Activated T-helper 1 cell treated with anti-CD3 and anti-CD28 coated beads, Interleukin-12 subunit alpha, Interleukin-12 subunit beta, Interleukin-2, Interleukin-4 antibody, amounts not matched to agents 30 ng/mL and 10 ng/mL and 1 ng/mL, durations not matched to agents 14 hours and 24 hours and 36 hours (primary cell): ENCODE measurements at regions of chr17 and their contacts with region 1.

Region 1: GRCh38 chr17:49191917-49192741 is 18.2 kb downstream of the GNGT2 start:
- DNase-seq: peak; percentile 88
- H3K4me3 Mint-ChIP-seq: peak overlapping the region; percentile 89
- H3K27ac Mint-ChIP-seq: peak overlapping the region; percentile 98
- H3K4me1 Mint-ChIP-seq: peaks cover 49% of the 10 kb centered on the region
- H3K27me3 Mint-ChIP-seq: peaks cover 8% of the 10 kb centered on the region

Region 2: GRCh38 chr17:48429638-48430586 is 762.2 kb before region 1 on chr17 and contains the start of gene SKAP1:
- intact Hi-C with region 1: loop called (anchors 10 kb)
- DNase-seq: peak; percentile 68
- H3K4me3 Mint-ChIP-seq: peak within 1 kb of the TSS; percentile 98
- H3K27ac Mint-ChIP-seq: peak within 1 kb of the TSS; percentile 99
- H3K4me1 Mint-ChIP-seq: peaks cover 72% of the 10 kb centered on the region
- H3K27me3 Mint-ChIP-seq: peaks cover 1% of the 10 kb centered on the region
- total RNA-seq, gene SKAP1: 48.7 and 51.9 TPM in 2 replicates

Region 3: DNA sequence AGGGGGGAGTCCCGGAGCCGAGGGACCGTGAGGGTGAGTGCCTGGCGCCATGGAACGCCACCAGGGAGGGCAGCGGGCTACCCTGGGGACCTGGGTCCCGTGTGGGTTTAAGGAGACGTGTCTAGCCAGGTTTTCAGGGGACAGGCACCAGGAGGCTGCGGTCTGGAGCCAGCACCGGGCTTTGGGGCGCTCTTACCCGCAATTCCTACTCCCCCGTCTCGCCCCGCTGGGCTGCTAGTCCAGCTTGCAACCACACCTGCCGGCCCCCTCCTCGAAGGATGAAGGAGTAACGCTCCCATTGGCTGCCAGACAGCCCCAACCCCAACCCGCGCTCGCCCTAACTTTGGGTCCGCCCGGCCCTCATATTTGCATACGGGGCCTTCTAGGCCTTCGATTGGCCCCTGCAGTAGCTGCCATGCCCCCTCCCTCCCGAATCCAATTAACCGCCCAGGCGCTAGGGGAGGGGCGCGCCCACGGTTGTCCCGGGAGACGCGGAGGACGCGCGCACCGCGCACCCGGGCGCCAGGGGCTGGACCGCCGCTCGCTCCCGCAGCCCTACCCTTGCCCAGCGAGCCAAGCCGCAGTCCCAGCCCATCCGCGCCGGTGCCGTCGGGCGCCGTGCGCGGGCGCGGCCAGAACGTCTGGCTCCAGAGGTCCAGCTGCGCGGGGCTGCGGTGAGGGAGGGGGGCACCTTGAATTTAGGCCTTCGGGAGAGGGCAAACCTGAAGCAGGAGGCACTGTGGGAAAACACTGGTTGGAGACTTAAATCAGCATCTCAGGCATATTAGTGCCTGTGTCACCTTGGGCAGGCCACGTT is 375.1 kb before region 1 on chr17 and contains the start of gene TTLL6:
- intact Hi-C with region 1: no loop called
- DNase-seq: peak; percentile 81
- H3K4me3 Mint-ChIP-seq: peak within 1 kb of the TSS; percentile 81
- H3K27ac Mint-ChIP-seq: no peak within 1 kb of the TSS
- H3K4me1 Mint-ChIP-seq: peaks cover 18% of the 10 kb centered on the region
- H3K27me3 Mint-ChIP-seq: peaks cover 65% of the 10 kb centered on the region
- total RNA-seq, gene TTLL6: not detected in 2 replicates

Region 4: DNA sequence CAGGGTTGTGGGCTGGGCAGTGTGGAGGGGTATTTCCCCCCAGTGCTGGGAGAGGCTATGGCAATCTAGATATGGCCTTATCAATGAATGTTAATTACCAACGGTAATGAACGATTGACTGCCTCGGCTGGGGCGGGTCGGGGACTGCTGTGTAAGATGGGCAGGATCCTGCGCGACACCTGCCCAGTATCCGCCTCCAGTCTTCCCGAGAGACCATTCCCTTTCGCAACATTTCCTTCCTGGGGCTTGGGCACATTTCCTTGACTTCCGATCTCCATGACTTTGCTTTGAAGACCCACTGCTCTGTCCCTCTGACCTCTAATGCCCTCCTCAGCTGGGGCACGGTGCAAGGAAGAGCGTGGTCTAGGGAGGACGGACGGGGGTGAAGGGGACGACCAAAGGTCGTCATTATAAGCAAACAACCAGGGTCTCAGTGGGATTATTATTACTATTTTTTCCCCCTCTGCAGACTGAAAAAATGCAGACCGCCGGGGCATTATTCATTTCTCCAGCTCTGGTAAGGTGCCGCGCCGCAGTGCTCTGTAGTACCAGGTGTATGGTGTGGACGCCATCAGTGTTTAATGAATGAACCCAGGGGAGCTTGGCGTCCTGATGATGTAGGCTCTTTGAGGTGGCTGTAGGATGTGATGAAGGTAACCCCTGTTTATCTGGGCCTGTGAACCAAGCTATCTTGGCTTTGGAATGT is 299.0 kb before region 1 on chr17:
- intact Hi-C with region 1: loop called (anchors 1 kb)
- DNase-seq: no peak
- H3K4me3 Mint-ChIP-seq: peak overlapping the region; percentile 97
- H3K27ac Mint-ChIP-seq: peak overlapping the region; percentile 95
- H3K4me1 Mint-ChIP-seq: peaks cover 31% of the 10 kb centered on the region
- H3K27me3 Mint-ChIP-seq: no peaks in the 10 kb centered on the region

Region 5: DNA sequence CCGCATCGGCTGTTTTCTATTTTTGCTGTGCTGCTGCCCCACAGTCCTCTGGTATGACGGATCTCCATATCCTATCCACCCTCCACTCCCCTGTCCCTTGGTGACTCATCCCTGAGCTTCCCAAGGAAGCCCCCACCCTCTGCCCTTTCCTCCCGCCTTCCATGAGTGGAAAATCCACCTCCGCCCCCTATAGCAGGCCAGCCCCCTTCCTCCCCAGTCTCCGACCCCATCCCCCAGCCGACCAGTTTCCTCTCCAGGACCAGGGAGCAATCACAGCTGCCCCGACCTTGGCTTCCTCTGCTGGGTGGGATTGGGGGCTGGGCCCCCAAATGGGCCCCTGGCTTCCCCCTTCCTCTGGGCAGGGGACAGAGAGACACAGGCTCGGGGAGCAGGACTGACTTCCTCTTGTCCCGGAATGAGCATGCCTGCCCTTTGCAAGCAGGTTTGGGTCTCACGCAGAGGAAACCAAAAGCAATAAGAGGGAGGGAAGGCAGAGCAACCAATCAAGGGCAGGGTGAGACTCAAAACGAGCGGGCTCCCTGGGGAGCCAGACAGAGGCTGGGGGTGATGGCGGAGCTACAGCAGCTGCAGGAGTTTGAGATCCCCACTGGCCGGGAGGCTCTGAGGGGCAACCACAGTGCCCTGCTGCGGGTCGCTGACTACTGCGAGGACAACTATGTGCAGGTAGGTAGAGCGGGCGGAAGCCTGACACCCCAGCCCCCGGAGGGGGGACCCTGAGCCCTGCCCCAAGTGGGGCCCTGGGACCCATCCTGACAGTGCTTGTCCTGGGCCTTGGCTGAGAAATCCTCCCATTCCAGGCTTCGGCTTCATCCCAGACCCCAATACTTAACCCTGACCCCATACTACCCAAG is 18.3 kb after region 1 on chr17 and contains the starts of genes ABI3 and GNGT2:
- intact Hi-C with region 1: loop called (anchors 1 kb)
- DNase-seq: peak; percentile 65
- H3K4me3 Mint-ChIP-seq: peak within 1 kb of the TSS; percentile 96
- H3K27ac Mint-ChIP-seq: peak within 1 kb of the TSS; percentile 88
- H3K4me1 Mint-ChIP-seq: peaks cover 63% of the 10 kb centered on the region
- H3K27me3 Mint-ChIP-seq: no peaks in the 10 kb centered on the region
- total RNA-seq, gene ABI3: 32.8 and 33.0 TPM in 2 replicates
- total RNA-seq, gene GNGT2: 16.5 and 18.4 TPM in 2 replicates

Region 6: GRCh38 chr17:49230636-49231562 is 38.8 kb after region 1 on chr17 and contains the start of gene PHOSPHO1:
- intact Hi-C with region 1: loop called (anchors 1 kb)
- DNase-seq: peak; percentile 82
- H3K4me3 Mint-ChIP-seq: peak within 1 kb of the TSS; percentile 87
- H3K27ac Mint-ChIP-seq: no peak within 1 kb of the TSS
- H3K4me1 Mint-ChIP-seq: peaks cover 24% of the 10 kb centered on the region
- H3K27me3 Mint-ChIP-seq: peaks cover 37% of the 10 kb centered on the region
- total RNA-seq, gene PHOSPHO1: 0.37 TPM in 1 of 2 replicates, not detected in the other

Region 7: GRCh38 chr17:49277638-49278037 is 85.5 kb after region 1 on chr17:
- intact Hi-C with region 1: no loop called
- DNase-seq: no peak
- H3K4me3 Mint-ChIP-seq: no peak overlapping the region
- H3K27ac Mint-ChIP-seq: no peak overlapping the region
- H3K4me1 Mint-ChIP-seq: no peaks in the 10 kb centered on the region
- H3K27me3 Mint-ChIP-seq: peaks cover 8% of the 10 kb centered on the region

Region 8: GRCh38 chr17:49333804-49334203 is 141.7 kb after region 1 on chr17:
- intact Hi-C with region 1: no loop called
- DNase-seq: no peak
- H3K4me3 Mint-ChIP-seq: no peak overlapping the region
- H3K27ac Mint-ChIP-seq: no peak overlapping the region
- H3K4me1 Mint-ChIP-seq: peaks cover 19% of the 10 kb centered on the region
- H3K27me3 Mint-ChIP-seq: peaks cover under 1% of the 10 kb centered on the region

Region 9: GRCh38 chr17:49361902-49362722 is 170.0 kb after region 1 on chr17 and contains the start of gene ZNF652:
- intact Hi-C with region 1: loop called (anchors 2 kb)
- DNase-seq: peak; percentile 94
- H3K4me3 Mint-ChIP-seq: peak within 1 kb of the TSS; percentile 88
- H3K27ac Mint-ChIP-seq: peak within 1 kb of the TSS; percentile 89
- H3K4me1 Mint-ChIP-seq: peaks cover 62% of the 10 kb centered on the region
- H3K27me3 Mint-ChIP-seq: no peaks in the 10 kb centered on the region
- total RNA-seq, gene ZNF652: 6.3 and 7.5 TPM in 2 replicates

Region 10: GRCh38 chr17:49677933-49678847 is 486.1 kb after region 1 on chr17 and contains the start of gene SPOP:
- intact Hi-C with region 1: loop called (anchors 5 kb)
- DNase-seq: peak; percentile 99
- H3K4me3 Mint-ChIP-seq: peak within 1 kb of the TSS; percentile 91
- H3K27ac Mint-ChIP-seq: peak within 1 kb of the TSS; percentile 99
- H3K4me1 Mint-ChIP-seq: peaks cover 41% of the 10 kb centered on the region
- H3K27me3 Mint-ChIP-seq: peaks cover 5% of the 10 kb centered on the region
- total RNA-seq, gene SPOP: 58.3 and 61.9 TPM in 2 replicates